ENCODE measurements at regions of chr2 and their contacts with region 1.

Region 1: DNA sequence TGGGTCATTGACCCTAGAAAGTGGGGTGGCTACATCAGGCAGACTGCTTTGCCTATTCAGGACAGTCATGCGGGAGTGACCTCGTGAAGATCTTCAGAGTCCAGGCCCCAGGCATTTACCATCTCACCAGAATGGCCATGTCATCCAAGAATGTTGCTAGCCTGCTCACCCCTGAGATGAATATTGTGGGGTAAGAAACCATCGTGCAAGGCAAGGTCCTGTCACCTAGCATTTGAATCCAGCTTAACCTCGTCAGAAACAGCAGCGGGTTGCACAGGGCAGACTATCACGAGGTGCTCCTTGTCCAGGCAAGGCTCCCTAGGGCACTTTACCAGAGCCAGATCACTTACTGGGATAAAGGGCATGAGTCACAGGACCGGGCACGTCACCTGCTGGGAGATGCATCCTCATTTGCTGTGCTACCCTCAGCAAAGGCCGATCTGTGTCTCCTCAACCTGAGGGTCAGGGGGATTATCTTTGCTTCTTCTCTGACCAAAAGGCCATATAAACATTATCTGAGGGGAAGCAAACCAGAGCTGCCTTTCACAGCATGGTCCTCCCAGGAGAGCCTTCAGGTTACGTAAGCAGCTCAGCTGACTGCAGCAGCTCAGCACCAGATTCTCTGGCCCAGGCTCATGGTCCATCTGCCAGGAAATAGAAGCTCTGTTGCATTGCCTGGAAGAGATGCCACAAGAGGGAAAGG is 162.4 kb downstream of the ACKR3 start:
- DNase-seq: peak in 4 of 5 donors; percentile 82 to 88 (median 85)
- ATAC-seq: peak; percentile 95 to 96 (median 95)
- H3K4me3 ChIP-seq: no peak overlapping the region
- H3K27ac ChIP-seq: peak overlapping the region; percentile 50 to 84 (median 78)
- H3K4me1 ChIP-seq: peaks cover 3 to 32% (median 19%) of the 10 kb centered on the region in 12 donors
- H3K27me3 ChIP-seq: no peaks in the 10 kb centered on the region
- CTCF ChIP-seq: no peak
- POLR2A ChIP-seq: no peak

Region 2: DNA sequence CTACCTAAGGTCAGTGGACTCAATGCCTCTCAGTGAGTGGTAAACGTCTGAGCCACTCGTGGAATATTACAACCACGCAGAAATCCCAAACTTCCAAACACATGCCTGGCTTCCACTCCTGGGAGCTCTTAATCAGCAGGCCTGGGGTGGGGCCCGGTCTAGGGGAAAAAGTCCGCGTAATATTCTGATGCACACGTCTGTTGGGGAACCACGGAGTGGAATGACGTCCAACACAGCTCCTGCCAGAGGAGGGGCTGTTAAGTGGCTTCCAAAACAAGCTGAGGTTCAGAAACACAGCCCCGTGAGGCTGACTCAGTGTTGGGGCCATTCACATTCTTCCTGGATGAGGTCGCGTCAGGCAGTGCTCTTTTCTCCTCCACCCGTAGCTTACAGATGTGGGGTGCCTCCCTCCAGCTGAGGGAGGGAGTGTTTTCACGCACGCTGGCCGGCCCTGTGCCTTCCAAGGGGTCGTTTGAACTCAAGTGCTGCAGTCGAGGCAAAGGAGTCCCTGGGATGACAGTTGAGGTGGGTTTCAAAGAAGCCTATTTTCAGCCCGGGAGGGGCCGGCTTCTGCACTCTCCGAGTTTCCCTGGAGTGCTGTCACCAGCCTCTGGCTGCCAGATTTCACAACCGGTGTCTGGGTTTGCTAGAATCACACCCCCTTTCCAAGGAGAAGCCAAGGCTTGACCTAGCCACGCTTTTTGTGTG is 89.3 kb before region 1 on chr2:
- intact Hi-C with region 1: loop called in 1 of 10 experiments (anchors 5 kb)
- DNase-seq: peak; percentile 82 to 94 (median 83)
- ATAC-seq: peak; percentile 78 to 96 (median 94)
- H3K4me3 ChIP-seq: no peak overlapping the region
- H3K27ac ChIP-seq: peak overlapping the region; percentile 11 to 86 (median 72)
- H3K4me1 ChIP-seq: peaks cover 0 to 25% (median 7%) of the 10 kb centered on the region in 12 donors
- H3K27me3 ChIP-seq: no peaks in the 10 kb centered on the region
- CTCF ChIP-seq: peak in 1 of 12 donors; percentile 7
- POLR2A ChIP-seq: no peak

Region 3: DNA sequence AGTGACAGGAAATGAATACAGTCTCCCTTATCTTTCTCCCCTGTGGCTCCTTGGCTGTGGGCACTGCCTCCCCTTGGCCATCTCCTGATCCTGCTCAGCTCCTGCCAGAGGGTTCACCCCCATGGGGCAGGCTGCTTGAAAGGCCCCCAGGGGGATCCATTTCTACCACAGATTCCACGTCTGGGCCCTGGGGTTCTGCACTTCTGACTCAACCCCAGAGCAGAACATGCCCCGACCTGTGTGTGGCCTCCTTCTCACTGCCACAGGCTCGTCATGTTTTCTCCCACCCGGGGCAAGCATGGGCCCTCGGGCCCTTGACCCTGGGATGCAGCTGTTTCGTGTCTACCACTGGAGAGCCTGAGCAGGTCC is 40.2 kb before region 1 on chr2:
- intact Hi-C with region 1: no loop called
- DNase-seq: peak in 1 of 5 donors; percentile 28
- ATAC-seq: peak in 1 of 4 donors; percentile 21
- H3K4me3 ChIP-seq: no peak overlapping the region
- H3K27ac ChIP-seq: no peak overlapping the region
- H3K4me1 ChIP-seq: peaks cover 0 to 43% (median 24%) of the 10 kb centered on the region in 12 donors
- H3K27me3 ChIP-seq: no peaks in the 10 kb centered on the region
- CTCF ChIP-seq: no peak
- POLR2A ChIP-seq: no peak

Region 4: DNA sequence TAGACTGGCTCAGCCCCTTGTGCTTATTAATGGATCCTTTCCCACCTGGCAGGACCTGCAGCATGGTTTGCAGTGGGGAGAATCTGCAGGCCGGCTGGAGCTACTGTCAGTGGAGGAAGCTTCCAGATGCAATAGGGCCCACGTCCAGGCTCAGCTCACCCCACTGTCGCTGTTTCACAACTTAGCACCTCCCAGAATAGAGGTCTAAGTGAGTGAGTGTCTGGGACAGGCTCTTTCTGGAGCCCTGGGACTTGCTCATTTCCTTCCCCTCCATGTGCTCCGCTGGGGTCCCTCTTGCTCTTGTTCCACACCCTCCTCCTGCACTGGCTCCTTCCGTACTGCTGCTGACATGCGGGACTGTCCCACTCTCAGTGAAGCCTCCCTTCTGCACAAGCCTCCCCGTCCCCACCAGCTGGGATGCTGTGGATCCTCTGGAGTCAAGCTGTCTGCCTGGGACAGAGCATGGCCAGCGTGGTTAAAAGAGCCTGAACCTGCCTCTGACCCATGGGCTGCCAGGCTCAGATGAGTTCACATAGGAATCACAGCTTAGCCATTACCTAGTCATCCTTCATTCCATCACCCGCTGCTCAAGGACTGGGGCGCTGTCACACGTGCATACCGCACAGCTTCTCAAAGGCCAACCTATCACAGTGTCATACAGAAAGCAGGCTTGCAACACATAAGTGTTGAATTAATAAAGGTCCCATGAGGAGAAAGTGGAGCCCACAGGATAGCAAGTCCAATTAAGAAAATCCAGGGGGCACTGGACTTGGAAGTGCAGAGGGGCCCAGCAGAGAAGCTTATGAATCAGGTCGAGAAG is 26.5 kb before region 1 on chr2:
- intact Hi-C with region 1: no loop called
- DNase-seq: no peak
- ATAC-seq: peak in 3 of 4 donors; percentile 50 to 73 (median 50)
- H3K4me3 ChIP-seq: no peak overlapping the region
- H3K27ac ChIP-seq: no peak overlapping the region
- H3K4me1 ChIP-seq: peaks cover 0 to 15% (median 0%) of the 10 kb centered on the region in 12 donors
- H3K27me3 ChIP-seq: no peaks in the 10 kb centered on the region
- CTCF ChIP-seq: no peak
- POLR2A ChIP-seq: no peak

Region 5: GRCh38 chr2:236748801-236749200 is 16.8 kb after region 1 on chr2:
- intact Hi-C with region 1: no loop called
- DNase-seq: peak in 4 of 5 donors; percentile 34 to 57 (median 51)
- ATAC-seq: peak; percentile 59 to 75 (median 70)
- H3K4me3 ChIP-seq: no peak overlapping the region
- H3K27ac ChIP-seq: peak overlapping the region in 9 of 12 donors; percentile 9 to 65 (median 42)
- H3K4me1 ChIP-seq: peaks cover 0 to 39% (median 17%) of the 10 kb centered on the region in 12 donors
- H3K27me3 ChIP-seq: no peaks in the 10 kb centered on the region
- CTCF ChIP-seq: no peak
- POLR2A ChIP-seq: no peak

Measured in heart left ventricle (tissue), 16 donors.